Psoas muscle (tissue), 8 donors: ENCODE measurements at regions of chr17 and their contacts with region 1.

Region 1: DNA sequence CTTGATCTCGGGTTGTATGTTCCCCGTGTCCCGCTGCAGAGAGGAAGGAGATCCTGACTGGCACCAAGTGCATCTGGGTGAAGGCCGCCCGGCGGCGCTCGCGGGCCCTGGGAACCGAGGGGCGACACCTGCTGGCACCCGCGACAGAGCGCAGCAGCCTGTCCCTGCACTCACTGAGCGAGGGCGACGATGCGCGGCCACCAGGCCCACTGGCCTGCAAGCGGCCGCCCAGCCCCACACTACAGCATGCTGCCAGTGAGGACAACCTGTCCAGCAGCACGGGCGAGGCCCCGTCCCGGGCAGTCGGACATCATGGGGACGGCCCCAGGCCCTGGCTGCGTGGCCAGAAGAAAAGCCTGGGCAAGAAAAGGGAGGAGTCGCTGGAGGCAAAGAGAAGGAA is 7.5 kb downstream of the BTBD17 start:
- DNase-seq: peak in 1 of 2 donors; percentile 45
- ATAC-seq: peak in 1 of 4 donors; percentile 33
- H3K4me3 ChIP-seq: no peak overlapping the region
- H3K27ac ChIP-seq: no peak overlapping the region
- H3K4me1 ChIP-seq: no peaks in the 10 kb centered on the region
- H3K27me3 ChIP-seq: peaks cover 0 to 88% (median 36%) of the 10 kb centered on the region in 3 donors
- CTCF ChIP-seq: peak; percentile 16

Region 2: GRCh38 chr17:74303305-74303704 is 50.8 kb before region 1 on chr17:
- intact Hi-C with region 1: loop called (anchors 2 to 5 kb)
- DNase-seq: no peak
- ATAC-seq: no peak
- H3K4me3 ChIP-seq: no peak overlapping the region
- H3K27ac ChIP-seq: no peak overlapping the region
- H3K4me1 ChIP-seq: no peaks in the 10 kb centered on the region
- H3K27me3 ChIP-seq: no peaks in the 10 kb centered on the region
- CTCF ChIP-seq: no peak

Region 3: DNA sequence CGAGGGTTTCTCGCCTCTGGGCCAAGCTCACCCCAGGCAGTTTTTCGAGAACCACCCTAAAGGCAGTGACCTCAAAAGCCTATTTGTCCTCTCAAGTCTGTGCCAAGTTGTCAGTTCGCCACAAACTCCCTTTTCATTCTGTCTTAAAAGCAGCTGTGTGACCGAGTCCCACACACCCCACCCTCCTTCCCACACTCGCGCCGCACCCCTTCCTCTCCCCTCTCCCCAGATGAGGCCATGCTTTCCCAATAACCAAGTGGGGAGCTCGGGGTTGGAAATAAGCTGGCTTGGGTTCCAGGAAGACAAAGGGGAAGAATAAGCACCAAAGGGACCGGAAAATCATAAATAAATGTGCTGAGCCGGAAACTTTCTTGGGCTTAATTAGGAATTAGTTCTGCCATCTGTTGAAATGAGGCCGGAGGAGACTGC is 468.8 kb after region 1 on chr17:
- intact Hi-C with region 1: no loop called
- DNase-seq: peak in 1 of 2 donors; percentile 62
- ATAC-seq: peak in 1 of 4 donors; percentile 40
- H3K4me3 ChIP-seq: no peak overlapping the region
- H3K27ac ChIP-seq: no peak overlapping the region
- H3K4me1 ChIP-seq: no peaks in the 10 kb centered on the region
- H3K27me3 ChIP-seq: no peaks in the 10 kb centered on the region
- CTCF ChIP-seq: no peak